ENCODE measurements at regions of chr4 and their contacts with region 1.

Region 1: DNA sequence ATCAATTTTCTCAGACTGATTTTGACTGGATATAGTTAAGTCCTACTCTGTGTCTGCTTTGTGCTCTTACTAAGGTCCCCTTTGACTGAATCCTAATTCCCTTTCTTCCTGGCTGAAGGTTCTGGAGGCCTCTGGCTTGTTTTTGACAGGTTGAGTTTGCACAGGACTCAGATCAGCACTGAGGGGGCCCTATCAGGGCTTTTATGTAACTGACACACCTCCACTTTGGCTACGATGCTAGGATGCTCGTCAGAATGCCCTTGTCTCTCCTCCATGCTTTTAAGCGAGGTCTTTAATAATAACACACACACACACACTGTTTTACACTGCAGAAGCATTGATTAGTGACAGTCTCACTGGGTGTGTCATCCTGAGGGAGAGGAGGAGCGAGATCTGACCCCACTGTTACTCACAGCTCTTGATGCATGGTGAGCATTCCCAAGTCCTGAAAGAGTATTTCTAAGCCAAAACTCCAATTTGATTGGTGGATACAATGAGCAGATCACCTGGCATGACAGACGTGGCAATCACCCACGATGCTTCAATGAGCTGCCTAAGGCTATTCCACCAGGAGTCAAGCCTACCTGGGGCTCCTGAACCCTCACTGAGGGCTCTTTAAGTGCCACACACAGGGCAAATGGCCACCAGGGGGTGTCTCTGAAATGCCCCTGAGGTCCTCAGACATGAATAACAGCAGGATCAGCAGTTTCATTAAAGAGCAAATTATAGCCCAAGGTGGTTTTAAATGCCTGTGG is 130.4 kb upstream of the CPEB2 start:
- DNase-seq: peak; percentile 92
- H3K4me3 ChIP-seq: no peak overlapping the region
- H3K27ac ChIP-seq: no peak overlapping the region
- H3K4me1 ChIP-seq: peaks cover 13% of the 10 kb centered on the region
- H3K27me3 ChIP-seq: no peaks in the 10 kb centered on the region
- CTCF ChIP-seq: peak; percentile 48 to 59

Region 2: DNA sequence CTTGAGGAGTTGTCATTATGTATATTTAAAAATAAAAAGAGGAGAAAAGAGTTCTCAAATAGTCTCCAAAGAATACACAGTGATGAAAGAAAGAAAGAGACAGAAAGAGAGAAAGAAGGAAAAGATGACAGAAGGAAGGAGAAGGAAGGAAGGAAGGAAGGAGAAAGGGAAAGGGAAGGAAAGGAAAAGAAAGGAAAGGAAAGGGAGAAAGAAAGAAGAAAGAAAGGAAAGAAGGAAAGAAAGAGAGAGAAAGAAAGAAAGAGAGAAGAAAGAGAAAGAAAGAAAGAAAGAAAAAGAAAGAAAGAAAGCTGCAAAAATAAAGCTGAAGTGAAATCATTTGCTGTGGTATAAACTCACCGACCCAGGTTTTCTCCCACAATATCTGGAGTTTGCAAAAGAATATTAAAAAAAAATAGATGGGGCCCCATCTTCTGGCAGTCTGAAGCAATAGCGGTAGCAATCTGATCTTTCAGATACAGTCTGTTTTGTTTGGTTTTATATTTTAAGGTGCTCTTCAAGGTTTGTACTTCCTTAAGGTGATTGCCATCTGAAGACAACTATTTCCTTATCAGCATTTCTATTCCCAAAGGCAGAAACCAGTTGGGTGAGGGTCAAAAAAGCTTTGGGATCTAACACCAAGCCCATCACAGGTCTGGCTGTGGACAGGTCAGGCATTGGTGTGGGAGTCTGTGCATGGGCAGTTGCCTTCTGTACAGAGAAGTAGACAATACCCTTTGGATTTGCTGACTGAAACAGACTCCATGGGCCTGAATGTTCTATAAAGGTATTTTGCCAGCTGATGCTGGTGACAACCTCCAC is 290.8 kb after region 1 on chr4:
- CTCF ChIA-PET with region 1: no interaction called
- dilution Hi-C with region 1: no loop called
- in situ Hi-C with region 1: no loop called
- intact Hi-C with region 1: loop called (anchors 5 kb)
- DNase-seq: no peak
- H3K4me3 ChIP-seq: no peak overlapping the region
- H3K27ac ChIP-seq: no peak overlapping the region
- H3K4me1 ChIP-seq: no peaks in the 10 kb centered on the region
- H3K27me3 ChIP-seq: peaks cover 3% of the 10 kb centered on the region
- CTCF ChIP-seq: peak; percentile 23 to 53

Measured in mammary epithelial cell (primary cell).